Activated CD4-positive, alpha-beta memory T cell treated with anti-CD3 and anti-CD28 coated beads for 36 hours (primary cell): ENCODE measurements at regions of chr1 and their contacts with region 1.

Region 1: DNA sequence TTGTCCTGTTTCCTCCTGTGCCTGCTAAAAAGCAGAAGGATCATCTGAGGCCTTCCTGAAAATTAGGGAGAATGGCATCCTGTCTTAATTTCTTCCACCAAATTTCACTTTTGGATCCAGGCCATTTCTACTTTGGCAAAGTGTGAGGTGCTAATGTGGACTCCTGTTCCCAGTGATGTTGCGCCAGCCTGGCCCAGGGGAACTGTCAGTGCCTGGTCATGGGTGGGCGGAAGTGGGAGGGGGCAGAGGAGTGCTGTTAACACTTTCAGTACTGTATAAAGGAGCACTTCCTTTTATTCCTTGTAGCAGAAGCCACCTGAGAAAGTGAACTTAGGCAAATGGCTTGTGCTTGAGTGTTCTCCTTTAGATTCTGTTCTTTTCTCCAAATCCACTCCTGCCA is 19.9 kb downstream of the ELAPOR1 start:
- DNase-seq: no peak
- H3K4me3 Mint-ChIP-seq: no peak overlapping the region
- H3K27ac Mint-ChIP-seq: no peak overlapping the region
- H3K4me1 Mint-ChIP-seq: peaks cover 10% of the 10 kb centered on the region
- H3K27me3 Mint-ChIP-seq: no peaks in the 10 kb centered on the region

Region 2: GRCh38 chr1:109181105-109181806 is 47.4 kb after region 1 on chr1:
- CTCF ChIA-PET with region 1: no interaction called
- POLR2A ChIA-PET with region 1: no interaction called
- intact Hi-C with region 1: loop called (anchors 5 kb)
- DNase-seq: no peak
- H3K4me3 Mint-ChIP-seq: no peak overlapping the region
- H3K27ac Mint-ChIP-seq: no peak overlapping the region
- H3K4me1 Mint-ChIP-seq: no peaks in the 10 kb centered on the region
- H3K27me3 Mint-ChIP-seq: no peaks in the 10 kb centered on the region